Breast epithelium (tissue), 4 donors: ENCODE measurements at regions of chr16 and their contacts with region 1.

Region 1: DNA sequence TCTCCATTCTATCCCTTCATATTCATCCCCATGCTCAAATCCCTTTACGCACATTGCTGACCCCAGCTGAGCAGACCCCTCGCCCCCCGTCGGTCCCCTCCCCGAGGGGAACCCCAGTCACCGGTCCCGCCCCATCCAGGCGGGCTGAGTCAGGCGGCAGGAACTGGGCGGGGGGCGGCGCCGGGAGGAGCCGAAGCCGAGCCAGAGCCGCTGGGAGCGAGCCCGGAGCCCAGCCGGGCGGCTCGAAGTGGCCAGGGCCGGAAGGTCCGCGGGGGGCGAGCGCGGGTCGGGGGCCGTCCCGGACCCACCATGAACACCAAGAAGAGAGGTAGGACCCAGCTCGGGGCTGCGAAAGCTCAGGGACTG is 8.6 kb downstream of the RIPOR1 start:
- DNase-seq: no peak
- H3K4me3 ChIP-seq: peak overlapping the region; percentile 77 to 91 (median 85)
- H3K27ac ChIP-seq: peak overlapping the region; percentile 81 to 96
- H3K4me1 ChIP-seq: peaks cover 3 to 7% of the 10 kb centered on the region in 2 donors
- H3K27me3 ChIP-seq: no peaks in the 10 kb centered on the region
- CTCF ChIP-seq: no peak
- POLR2A ChIP-seq: no peak

Region 2: DNA sequence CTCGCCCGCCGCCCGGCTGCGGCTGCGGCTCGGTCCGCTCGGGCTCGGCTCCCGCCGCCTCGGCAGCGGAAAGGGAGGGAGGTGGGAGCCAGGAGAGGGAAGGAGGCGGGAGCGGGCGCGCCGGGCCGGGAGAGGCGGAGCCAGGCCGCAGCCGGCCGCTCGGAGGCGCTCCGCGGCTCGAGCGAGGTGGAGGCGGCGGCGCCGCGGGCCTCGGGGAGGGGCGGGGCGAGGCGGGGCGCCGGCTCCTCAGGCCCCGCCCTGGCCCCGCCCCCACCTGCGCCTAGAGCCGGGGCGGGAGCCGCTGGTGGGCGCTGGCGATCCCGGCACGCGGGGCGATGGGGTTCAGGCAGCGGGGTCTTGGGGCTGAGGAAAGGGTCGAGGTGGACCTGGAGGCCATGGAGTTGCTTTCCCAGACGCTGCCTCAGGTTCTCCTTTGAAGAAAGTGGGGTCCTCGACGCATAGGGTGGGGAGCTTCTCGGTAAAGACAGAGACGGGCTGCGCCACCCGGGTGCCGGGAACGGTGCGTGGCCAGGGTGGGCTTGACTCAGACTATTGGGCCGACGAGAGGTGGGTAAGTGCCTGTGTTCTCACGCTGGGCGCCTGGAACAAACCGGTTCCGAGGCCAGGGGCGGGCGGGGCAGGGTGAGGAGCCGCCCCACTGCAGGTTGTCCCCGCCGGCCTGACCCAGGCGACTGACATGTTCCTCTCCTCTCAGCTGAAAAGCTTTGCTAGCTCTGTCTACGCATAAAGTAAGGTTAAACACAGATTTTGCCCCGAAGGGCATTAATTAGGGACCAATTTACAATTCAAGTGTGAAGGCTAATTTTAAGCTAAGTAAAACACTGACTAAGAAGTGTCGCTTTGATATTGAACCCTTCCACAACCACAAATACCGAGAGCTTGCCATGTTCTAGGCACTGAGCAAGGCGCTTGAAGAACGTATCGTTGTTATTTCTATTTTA is 840.3 kb before region 1 on chr16 and contains the start of gene CMTM4:
- intact Hi-C with region 1: no loop called
- DNase-seq: peak; percentile 84 to 87
- H3K4me3 ChIP-seq: peak within 1 kb of the TSS; percentile 54 to 89 (median 82)
- H3K27ac ChIP-seq: peak within 1 kb of the TSS; percentile 94 to 97
- H3K4me1 ChIP-seq: peaks cover 0 to 9% of the 10 kb centered on the region in 2 donors
- H3K27me3 ChIP-seq: no peaks in the 10 kb centered on the region
- CTCF ChIP-seq: no peak
- POLR2A ChIP-seq: no peak
- total RNA-seq, gene CMTM4: 12.5 to 35.4 (median 33.7) TPM

Region 3: DNA sequence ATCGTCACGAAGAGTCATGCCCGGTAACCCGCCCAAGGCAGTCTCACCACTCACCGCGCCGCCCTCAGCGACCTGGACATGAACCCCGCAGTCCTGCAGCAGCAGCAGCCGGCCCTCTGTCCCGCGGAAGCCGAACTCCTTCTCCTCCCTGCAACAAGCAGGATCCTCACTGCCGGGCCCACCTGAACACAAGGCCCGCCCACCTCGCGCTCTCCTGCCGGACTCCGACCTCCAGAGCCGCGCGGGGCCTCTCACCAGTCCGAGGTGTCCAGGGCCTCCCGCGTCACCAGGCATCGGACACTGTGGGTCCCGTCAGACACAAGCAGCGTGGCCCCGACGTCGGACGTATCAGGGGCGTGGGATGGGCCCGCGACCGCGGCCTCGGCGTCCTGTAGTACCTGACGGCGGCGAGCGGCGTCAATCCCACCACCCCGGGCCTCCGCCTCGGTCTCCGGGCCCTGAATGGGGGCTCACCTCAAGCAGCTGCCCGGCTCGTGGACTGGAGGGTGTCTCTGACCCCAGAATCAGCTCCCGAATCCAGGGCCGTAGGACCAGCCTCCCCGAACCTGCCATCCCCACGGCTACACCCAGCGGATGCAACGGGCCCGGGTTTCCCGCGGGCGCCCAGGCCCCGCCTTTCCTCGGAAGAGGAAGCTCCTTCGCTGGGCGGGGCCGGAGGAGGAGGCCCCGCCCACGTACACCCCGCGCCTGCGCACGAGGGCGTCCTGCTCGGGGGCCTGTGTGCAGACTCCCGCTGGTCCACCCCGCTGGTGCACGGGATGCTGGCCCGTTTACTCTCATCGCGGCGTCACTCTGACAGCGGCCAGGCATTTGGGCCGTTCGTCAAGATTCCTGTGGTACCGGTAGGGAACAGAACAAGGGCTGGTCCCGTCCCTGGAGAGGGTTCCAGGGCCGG is 122.7 kb after region 1 on chr16 and contains the start of gene ACD:
- intact Hi-C with region 1: loop called (anchors 5 kb)
- DNase-seq: peak; percentile 87 to 88
- H3K4me3 ChIP-seq: peak within 1 kb of the TSS; percentile 84 to 97 (median 87)
- H3K27ac ChIP-seq: peak within 1 kb of the TSS; percentile 95 to 96
- H3K4me1 ChIP-seq: peaks cover 6 to 13% of the 10 kb centered on the region in 2 donors
- H3K27me3 ChIP-seq: peaks cover 0 to 2% of the 10 kb centered on the region in 2 donors
- CTCF ChIP-seq: peak in 1 of 3 donors; percentile 6
- POLR2A ChIP-seq: peak; percentile 55
- total RNA-seq, gene ACD: 19.4 to 20.6 (median 19.8) TPM